ENCODE measurements at regions of chr1 and their contacts with region 1.

Region 1: DNA sequence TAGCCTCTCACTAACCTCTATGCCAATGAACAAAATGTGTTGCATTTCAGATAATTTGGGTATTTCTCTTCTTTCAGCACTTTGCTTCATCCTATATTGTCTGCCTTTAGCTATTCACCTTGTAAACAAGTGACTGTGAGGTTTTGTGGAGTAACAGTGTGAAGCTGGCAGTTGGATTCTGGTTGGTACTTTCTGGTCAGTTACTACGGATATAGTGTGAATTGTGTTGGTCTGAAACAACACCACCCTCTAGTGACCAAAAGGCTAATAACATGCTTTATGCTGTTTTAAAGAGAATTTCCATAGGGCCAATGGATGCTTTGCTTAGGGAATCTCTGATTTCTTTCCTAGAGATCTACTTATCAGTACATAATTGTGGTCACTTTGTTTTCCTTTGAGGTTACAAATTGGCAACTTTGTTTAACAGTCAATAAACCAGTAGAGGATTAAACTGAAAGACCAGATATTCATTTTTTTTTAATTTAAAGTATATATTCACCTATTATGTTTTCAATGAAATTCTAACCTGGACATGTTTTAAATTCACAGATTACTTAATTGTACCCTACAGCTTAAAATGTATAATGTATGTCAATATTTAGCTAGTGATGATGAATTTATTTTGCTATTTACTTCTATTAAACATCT is 2.5 kb upstream of the PTGER3 start:
- DNase-seq: no peak
- ATAC-seq: peak; percentile 59

Region 2: GRCh38 chr1:70528590-70529333 is 521.3 kb before region 1 on chr1:
- intact Hi-C with region 1: loop called in 1 of 2 experiments (anchors 5 kb)
- DNase-seq: peak in 1 of 2 donors; percentile 6
- ATAC-seq: peak; percentile 60

Region 3: GRCh38 chr1:70685300-70686241 is 364.5 kb before region 1 on chr1:
- intact Hi-C with region 1: loop called in 1 of 2 experiments (anchors 2 kb)
- DNase-seq: peak; percentile 36 to 46
- ATAC-seq: peak; percentile 87